MCF 10A (cell line): ENCODE measurements at regions of chr4 and their contacts with region 1.

Region 1: GRCh38 chr4:136864580-136865185 is 667.6 kb downstream of the PCDH18 start:
- DNase-seq: peak; percentile 85
- H3K4me3 Mint-ChIP-seq: no peak overlapping the region
- H3K27ac Mint-ChIP-seq: no peak overlapping the region
- H3K4me1 Mint-ChIP-seq: peaks cover 4% of the 10 kb centered on the region
- H3K27me3 Mint-ChIP-seq: no peaks in the 10 kb centered on the region
- CTCF ChIP-seq: peak; percentile 72

Region 2: DNA sequence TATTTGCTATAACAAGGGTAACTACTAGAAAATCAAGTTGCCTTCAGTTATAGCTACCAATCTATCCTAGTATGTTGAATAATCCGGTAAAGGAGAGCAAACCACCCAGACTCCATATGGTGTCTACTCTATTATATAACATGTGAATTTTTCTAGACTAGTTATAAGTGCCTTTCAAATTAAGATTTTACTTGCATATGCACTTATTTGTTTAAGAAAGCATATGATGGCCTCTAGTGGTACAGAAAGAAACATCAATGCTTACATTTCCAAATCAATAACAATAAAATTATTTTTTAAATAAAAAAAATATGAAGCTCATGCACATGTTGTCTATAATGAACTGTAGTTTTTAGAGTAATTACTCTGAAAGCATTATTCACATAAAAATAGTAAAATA is 1146.7 kb before region 1 on chr4:
- CTCF ChIA-PET with region 1: no interaction called
- POLR2A ChIA-PET with region 1: no interaction called
- intact Hi-C with region 1: loop called (anchors 2 kb)
- DNase-seq: peak; percentile 2
- H3K4me3 Mint-ChIP-seq: no peak overlapping the region
- H3K27ac Mint-ChIP-seq: no peak overlapping the region
- H3K4me1 Mint-ChIP-seq: no peaks in the 10 kb centered on the region
- H3K27me3 Mint-ChIP-seq: no peaks in the 10 kb centered on the region
- CTCF ChIP-seq: no peak

Region 3: DNA sequence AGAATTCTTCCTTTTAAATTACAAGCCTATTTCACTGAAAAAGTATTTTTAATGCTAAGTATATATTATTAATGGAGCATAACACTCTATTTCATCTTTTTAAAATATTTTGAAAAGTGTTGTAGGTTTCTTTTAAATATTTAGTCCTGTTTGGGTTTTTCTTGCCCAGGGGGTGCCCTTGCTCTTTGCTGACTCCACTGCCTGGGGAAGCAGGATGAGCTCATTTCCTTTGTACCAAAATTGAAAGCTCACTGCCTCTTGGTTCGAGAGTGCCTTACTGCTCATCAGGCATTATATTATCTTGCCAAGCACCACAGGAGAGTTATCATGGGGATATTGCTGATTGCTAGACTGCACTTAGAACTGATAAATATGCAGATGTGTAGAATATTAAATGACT is 151.5 kb before region 1 on chr4:
- CTCF ChIA-PET with region 1: no interaction called
- POLR2A ChIA-PET with region 1: no interaction called
- intact Hi-C with region 1: loop called (anchors 5 kb)
- DNase-seq: peak; percentile 41
- H3K4me3 Mint-ChIP-seq: no peak overlapping the region
- H3K27ac Mint-ChIP-seq: no peak overlapping the region
- H3K4me1 Mint-ChIP-seq: no peaks in the 10 kb centered on the region
- H3K27me3 Mint-ChIP-seq: no peaks in the 10 kb centered on the region
- CTCF ChIP-seq: no peak